H1 (cell line): ENCODE measurements at regions of chr9 and their contacts with region 1.

Region 1: DNA sequence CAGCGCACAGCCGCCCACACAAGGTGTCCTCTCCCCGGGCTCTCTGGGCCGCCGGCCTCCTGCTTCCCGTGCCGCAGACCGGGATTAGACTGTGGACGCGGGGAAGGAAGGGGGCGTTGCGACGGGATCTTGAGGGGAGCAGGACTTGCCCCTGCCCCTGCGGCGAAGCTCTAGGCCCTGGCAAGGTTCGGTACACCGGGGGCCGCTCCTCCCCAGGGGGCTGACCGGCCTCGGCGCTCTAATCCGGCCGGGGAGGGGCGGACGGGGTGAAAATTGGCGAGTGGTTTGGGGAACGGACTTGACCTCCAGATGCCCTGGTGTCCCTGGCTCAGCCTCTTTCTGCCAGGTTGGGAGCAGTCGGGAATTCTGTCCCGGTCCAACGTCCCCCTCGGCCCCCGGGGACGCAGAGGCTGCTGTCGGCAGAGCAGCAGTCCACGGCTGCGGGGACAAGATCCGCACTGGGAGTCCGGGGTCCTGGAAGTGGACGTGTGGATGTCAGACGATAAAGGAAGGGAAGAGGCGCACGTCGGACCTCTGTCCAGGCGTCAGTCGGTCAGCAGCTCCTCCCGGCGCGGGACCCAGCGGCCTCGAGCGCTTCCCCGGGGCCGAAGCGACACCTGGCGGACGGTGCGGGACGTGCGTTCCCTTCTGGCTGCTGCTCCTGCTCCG is 1.9 kb upstream of the CNTFR start:
- DNase-seq: peak in 1 of 2 experiments; percentile 98
- H3K4me3 ChIP-seq: peak overlapping the region in 2 of 4 experiments; percentile 51 to 74; a peak in 4 of 8 replicates
- H3K27ac ChIP-seq: no peak overlapping the region
- H3K4me1 ChIP-seq: peaks cover 4 to 30% (median 16%) of the 10 kb centered on the region in 4 experiments
- H3K27me3 ChIP-seq: peaks cover 67 to 80% (median 75%) of the 10 kb centered on the region in 4 experiments
- CTCF ChIP-seq: peak; percentile 92 to 98 (median 96)
- EP300 ChIP-seq: no peak
- POLR2A ChIP-seq: no peak
- RAD21 ChIP-seq: peak; percentile 91 to 93

Region 2: GRCh38 chr9:34458013-34458958 is 133.1 kb before region 1 on chr9 and contains the starts of genes DNAI1 and FAM219A:
- CTCF ChIA-PET with region 1: interaction called, 13 read pairs
- POLR2A ChIA-PET with region 1: interaction called, 3 read pairs
- DNase-seq: peak; percentile 95 to 99
- H3K4me3 ChIP-seq: peak within 1 kb of the TSS; percentile 64 to 87 (median 84)
- H3K27ac ChIP-seq: no peak within 1 kb of the TSS
- H3K4me1 ChIP-seq: peaks cover 0 to 12% (median 6%) of the 10 kb centered on the region in 4 experiments; a peak in 6 of 7 replicates
- H3K27me3 ChIP-seq: peaks cover 0 to 12% (median 7%) of the 10 kb centered on the region in 4 experiments; a peak in 4 of 7 replicates
- CTCF ChIP-seq: no peak
- EP300 ChIP-seq: no peak
- POLR2A ChIP-seq: peak in 1 of 2 experiments; percentile 67; a peak in 1 of 3 replicates
- RAD21 ChIP-seq: no peak
- total RNA-seq, gene DNAI1: 0.37 and 1.1 TPM in 2 replicates
- total RNA-seq, gene FAM219A: 10.4 and 10.6 TPM in 2 replicates

Region 3: GRCh38 chr9:34500623-34501267 is 90.6 kb before region 1 on chr9:
- CTCF ChIA-PET with region 1: interaction called, 22 read pairs
- POLR2A ChIA-PET with region 1: no interaction called
- DNase-seq: peak in 1 of 2 experiments; percentile 91
- H3K4me3 ChIP-seq: no peak overlapping the region
- H3K27ac ChIP-seq: no peak overlapping the region
- H3K4me1 ChIP-seq: 0 out of 7 replicates have a peak, but pooled peaks cover 0 to 3% (median 0%) of the 10 kb centered on the region in 4 experiments
- H3K27me3 ChIP-seq: no peaks in the 10 kb centered on the region; a peak in 1 of 7 replicates
- CTCF ChIP-seq: peak; percentile 90 to 97 (median 96)
- EP300 ChIP-seq: no peak
- POLR2A ChIP-seq: no peak
- RAD21 ChIP-seq: peak; percentile 92 to 93

Region 4: GRCh38 chr9:34522971-34523797 is 68.2 kb before region 1 on chr9 and contains the start of gene ENHO:
- CTCF ChIA-PET with region 1: interaction called, 50 read pairs
- POLR2A ChIA-PET with region 1: no interaction called
- DNase-seq: peak; percentile 82 to 99
- H3K4me3 ChIP-seq: peak within 1 kb of the TSS; percentile 56 to 78 (median 64)
- H3K27ac ChIP-seq: no peak within 1 kb of the TSS
- H3K4me1 ChIP-seq: peaks cover 0 to 17% (median 8%) of the 10 kb centered on the region in 4 experiments; a peak in 6 of 7 replicates
- H3K27me3 ChIP-seq: peaks cover 1 to 14% (median 11%) of the 10 kb centered on the region in 4 experiments; a peak in 6 of 7 replicates
- CTCF ChIP-seq: no peak
- EP300 ChIP-seq: no peak
- POLR2A ChIP-seq: 0 out of 3 replicates have a peak, but pooled peaks of 1 of the 2 experiments have one; percentile 38
- RAD21 ChIP-seq: no peak
- total RNA-seq, gene ENHO: 12.2 and 14.1 TPM in 2 replicates

Region 5: GRCh38 chr9:34570376-34570775 is 21.0 kb before region 1 on chr9:
- CTCF ChIA-PET with region 1: interaction called, 214 read pairs
- POLR2A ChIA-PET with region 1: interaction called, 7 read pairs
- DNase-seq: no peak
- H3K4me3 ChIP-seq: no peak overlapping the region
- H3K27ac ChIP-seq: no peak overlapping the region
- H3K4me1 ChIP-seq: peaks cover 9 to 44% (median 17%) of the 10 kb centered on the region in 4 experiments
- H3K27me3 ChIP-seq: peaks cover 0 to 10% (median 5%) of the 10 kb centered on the region in 4 experiments; a peak in 3 of 7 replicates
- CTCF ChIP-seq: no peak
- EP300 ChIP-seq: no peak
- POLR2A ChIP-seq: no peak
- RAD21 ChIP-seq: no peak

Region 6: DNA sequence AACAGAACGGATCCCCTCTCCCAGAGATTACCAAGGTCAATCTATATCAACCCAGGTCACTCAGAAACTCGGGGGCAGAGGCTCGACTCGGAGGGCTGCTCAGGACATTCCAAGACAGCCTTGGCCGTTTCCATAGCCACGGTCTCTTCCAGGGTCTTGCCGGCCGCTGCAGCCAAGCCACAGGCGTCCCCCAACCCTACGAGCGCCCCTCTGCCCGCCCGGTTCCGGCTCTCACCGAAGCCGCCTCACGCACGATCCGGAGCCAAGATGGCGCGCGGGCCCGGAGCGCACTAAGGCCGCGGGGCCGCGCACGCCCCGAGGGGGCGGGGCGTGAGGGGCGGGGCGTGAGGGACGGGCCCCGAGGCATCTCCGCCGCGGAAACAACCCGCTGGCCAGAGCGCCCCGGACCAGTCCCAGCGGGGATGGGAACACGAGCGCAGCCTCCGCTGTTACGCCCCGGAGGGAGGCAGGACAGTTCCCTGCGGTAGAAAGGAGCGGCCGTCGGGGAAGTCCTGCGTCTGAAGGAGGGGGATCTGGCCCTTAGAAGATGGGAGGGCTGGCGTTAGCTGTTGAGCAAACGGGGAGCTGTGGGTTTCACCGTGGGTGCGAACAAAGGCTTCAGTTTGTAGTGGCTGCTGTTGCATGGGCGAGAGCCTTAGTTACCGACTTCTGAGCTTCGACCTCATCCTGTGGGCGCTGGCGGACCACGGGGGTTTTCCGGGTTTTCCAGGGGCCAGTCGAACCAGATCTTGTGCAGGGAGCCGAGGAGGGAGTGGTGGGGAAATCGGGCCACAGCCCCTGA is 20.6 kb after region 1 on chr9 and contains the start of gene RPP25L:
- CTCF ChIA-PET with region 1: interaction called, 81 read pairs
- POLR2A ChIA-PET with region 1: interaction called, 3 read pairs
- DNase-seq: peak in 1 of 2 experiments; percentile 88
- H3K4me3 ChIP-seq: peak within 1 kb of the TSS; percentile 74 to 87 (median 82)
- H3K27ac ChIP-seq: peak within 1 kb of the TSS; percentile 43; the same call in 1 of the 2 replicates
- H3K4me1 ChIP-seq: peaks cover 0 to 11% (median 6%) of the 10 kb centered on the region in 4 experiments; a peak in 6 of 7 replicates
- H3K27me3 ChIP-seq: peaks cover 0 to 6% (median 2%) of the 10 kb centered on the region in 4 experiments; a peak in 2 of 7 replicates
- CTCF ChIP-seq: peak in 1 of 3 experiments; percentile 3; a peak in 1 of 4 replicates
- EP300 ChIP-seq: no peak
- POLR2A ChIP-seq: peak in 1 of 2 experiments; percentile 44; a peak in 1 of 3 replicates
- RAD21 ChIP-seq: no peak
- total RNA-seq, gene RPP25L: 21.6 and 25.6 TPM in 2 replicates

Region 7: GRCh38 chr9:34675048-34675714 is 83.8 kb after region 1 on chr9:
- CTCF ChIA-PET with region 1: no interaction called
- POLR2A ChIA-PET with region 1: no interaction called
- DNase-seq: peak in 1 of 2 experiments; percentile 92
- H3K4me3 ChIP-seq: no peak overlapping the region
- H3K27ac ChIP-seq: no peak overlapping the region
- H3K4me1 ChIP-seq: 0 out of 7 replicates have a peak, but pooled peaks cover 0 to 2% (median under 1%) of the 10 kb centered on the region in 4 experiments
- H3K27me3 ChIP-seq: no peaks in the 10 kb centered on the region
- CTCF ChIP-seq: peak; percentile 92 to 100 (median 99)
- EP300 ChIP-seq: peak in 1 of 2 experiments; percentile 48; a peak in 1 of 3 replicates
- POLR2A ChIP-seq: no peak
- RAD21 ChIP-seq: peak; percentile 92 to 93